Activated CD4-positive, alpha-beta T cell treated with anti-CD3 and anti-CD28 coated beads, Interleukin-2, amount 10 ng/mL, durations not matched to agents 24 days and 14 days (primary cell): ENCODE measurements at regions of chr14 and their contacts with region 1.

Region 1: DNA sequence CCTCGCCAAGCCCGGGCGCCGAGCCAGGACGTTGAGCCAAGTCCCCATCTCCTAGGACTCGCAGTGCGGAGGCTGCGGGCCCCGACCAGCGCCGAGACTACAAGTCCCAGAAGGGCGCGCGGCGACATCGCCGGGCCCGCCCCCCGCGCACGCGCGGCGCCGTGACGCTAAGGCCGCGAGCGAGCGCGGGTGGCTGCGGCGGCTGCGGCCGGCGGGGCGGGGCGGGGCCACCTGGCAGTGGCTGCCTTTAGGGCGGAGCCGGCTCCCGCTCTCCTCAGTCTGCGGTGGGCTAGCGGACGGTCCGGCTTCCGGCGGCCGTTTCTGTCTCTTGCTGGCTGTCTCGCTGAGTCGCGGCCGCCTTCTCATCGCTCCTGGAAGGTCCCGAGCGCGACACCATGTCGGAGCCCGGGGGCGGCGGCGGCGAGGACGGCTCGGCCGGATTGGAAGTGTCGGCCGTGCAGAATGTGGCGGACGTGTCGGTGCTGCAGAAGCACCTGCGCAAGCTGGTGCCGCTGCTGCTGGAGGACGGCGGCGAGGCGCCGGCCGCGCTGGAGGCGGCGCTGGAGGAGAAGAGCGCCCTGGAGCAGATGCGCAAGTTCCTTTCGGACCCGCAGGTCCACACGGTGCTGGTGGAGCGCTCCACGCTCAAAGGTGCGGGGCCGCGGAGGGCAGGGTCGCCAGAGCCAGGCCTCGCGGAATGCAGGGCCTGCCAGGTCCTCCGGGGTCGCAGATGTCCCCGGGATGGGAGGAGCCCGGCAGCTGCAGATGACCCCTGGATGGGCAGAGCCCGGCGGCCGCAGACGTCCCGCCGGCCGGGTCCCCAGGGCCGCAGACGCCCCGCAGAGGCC is at the start of gene DYNC1H1:
- DNase-seq: peak; percentile 98
- H3K4me3 Mint-ChIP-seq: peak within 1 kb of the TSS; percentile 94
- H3K27ac Mint-ChIP-seq: peak within 1 kb of the TSS; percentile 94
- H3K4me1 Mint-ChIP-seq: peaks cover 35% of the 10 kb centered on the region
- H3K27me3 Mint-ChIP-seq: peaks cover 2% of the 10 kb centered on the region
- total RNA-seq, gene DYNC1H1: 265 and 272 TPM in 2 replicates

Region 2: DNA sequence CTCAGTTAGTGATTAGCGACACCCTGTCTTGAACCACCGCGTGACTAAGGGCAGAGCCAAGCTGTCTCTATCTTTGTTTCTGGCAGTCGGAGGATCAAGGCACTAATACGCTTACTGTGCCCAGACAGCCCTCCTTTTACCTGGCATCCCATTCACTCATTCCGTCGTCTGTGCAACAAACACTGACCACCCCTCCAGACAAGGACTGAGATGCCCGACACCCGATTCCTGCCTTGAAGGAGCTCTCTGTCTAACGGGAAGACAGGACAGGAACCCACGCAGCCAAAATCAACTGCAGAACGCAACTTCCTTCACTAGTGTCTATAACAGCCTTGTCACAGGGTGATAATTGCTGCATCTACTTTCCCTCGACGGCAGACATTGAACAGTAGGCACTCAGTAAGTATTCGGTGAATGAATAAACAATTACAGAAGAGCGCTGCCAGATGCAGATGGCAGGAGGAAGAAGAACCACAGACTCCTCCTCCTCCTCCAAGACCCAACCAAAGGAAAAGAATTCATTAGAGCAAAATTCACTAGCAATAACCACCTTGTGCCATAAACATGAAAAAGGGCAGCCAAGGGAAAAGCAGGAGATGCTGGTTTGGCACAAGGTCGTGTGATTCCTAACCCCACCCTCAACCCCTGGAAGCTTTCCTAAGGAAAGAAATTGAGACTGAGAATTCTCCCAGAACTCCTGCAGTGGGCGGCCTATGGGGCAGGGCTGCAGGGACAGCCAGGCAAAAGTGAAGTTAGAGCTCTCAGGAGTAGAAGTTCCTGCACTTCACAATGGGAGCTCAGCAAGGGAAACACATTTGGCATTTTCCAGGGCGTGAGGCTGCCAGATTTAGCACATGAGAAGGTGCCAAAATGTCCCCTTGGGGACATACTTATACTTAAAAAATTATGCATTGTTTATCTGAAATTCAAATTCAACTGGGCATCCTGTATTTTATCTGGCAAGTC is 589.9 kb before region 1 on chr14:
- intact Hi-C with region 1: no loop called
- DNase-seq: peak; percentile 29
- H3K4me3 Mint-ChIP-seq: no peak overlapping the region
- H3K27ac Mint-ChIP-seq: no peak overlapping the region
- H3K4me1 Mint-ChIP-seq: no peaks in the 10 kb centered on the region
- H3K27me3 Mint-ChIP-seq: peaks cover 10% of the 10 kb centered on the region

Region 3: GRCh38 chr14:101707068-101707842 is 257.3 kb before region 1 on chr14:
- intact Hi-C with region 1: loop called (anchors 2 kb)
- DNase-seq: peak; percentile 92
- H3K4me3 Mint-ChIP-seq: peak overlapping the region; percentile 56
- H3K27ac Mint-ChIP-seq: peak overlapping the region; percentile 79
- H3K4me1 Mint-ChIP-seq: peaks cover 24% of the 10 kb centered on the region
- H3K27me3 Mint-ChIP-seq: peaks cover 21% of the 10 kb centered on the region

Region 4: DNA sequence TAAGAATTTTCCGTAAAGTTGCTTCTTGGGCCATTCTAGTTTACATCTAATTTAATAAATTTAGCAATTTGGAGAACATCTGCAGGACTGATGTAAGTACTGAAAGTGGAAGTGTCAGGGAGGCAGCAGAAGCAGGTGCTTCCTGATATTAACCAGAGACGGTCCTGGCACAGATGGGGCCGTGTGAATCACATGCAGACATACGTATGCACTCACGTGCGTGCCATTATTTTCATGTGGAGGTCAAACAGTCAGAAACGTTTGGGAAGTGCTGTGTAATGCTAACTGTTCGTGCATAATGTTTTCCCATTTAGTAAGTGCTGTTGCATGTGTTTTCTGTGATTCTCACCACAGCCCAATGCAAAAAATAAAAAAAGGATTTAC is 88.0 kb before region 1 on chr14:
- intact Hi-C with region 1: loop called (anchors 1 kb)
- DNase-seq: peak; percentile 88
- H3K4me3 Mint-ChIP-seq: peak overlapping the region; percentile 82
- H3K27ac Mint-ChIP-seq: peak overlapping the region; percentile 93
- H3K4me1 Mint-ChIP-seq: peaks cover 67% of the 10 kb centered on the region
- H3K27me3 Mint-ChIP-seq: no peaks in the 10 kb centered on the region

Region 5: GRCh38 chr14:102020058-102020971 is 55.8 kb after region 1 on chr14:
- intact Hi-C with region 1: loop called (anchors 2 kb)
- DNase-seq: peak; percentile 85
- H3K4me3 Mint-ChIP-seq: peak overlapping the region; percentile 54
- H3K27ac Mint-ChIP-seq: peak overlapping the region; percentile 88
- H3K4me1 Mint-ChIP-seq: peaks cover 22% of the 10 kb centered on the region
- H3K27me3 Mint-ChIP-seq: no peaks in the 10 kb centered on the region

Region 6: GRCh38 chr14:102096214-102097114 is 131.9 kb after region 1 on chr14:
- intact Hi-C with region 1: loop called (anchors 1 kb)
- DNase-seq: peak; percentile 90
- H3K4me3 Mint-ChIP-seq: no peak overlapping the region
- H3K27ac Mint-ChIP-seq: peak overlapping the region; percentile 66
- H3K4me1 Mint-ChIP-seq: peaks cover 21% of the 10 kb centered on the region
- H3K27me3 Mint-ChIP-seq: peaks cover 2% of the 10 kb centered on the region

Region 7: DNA sequence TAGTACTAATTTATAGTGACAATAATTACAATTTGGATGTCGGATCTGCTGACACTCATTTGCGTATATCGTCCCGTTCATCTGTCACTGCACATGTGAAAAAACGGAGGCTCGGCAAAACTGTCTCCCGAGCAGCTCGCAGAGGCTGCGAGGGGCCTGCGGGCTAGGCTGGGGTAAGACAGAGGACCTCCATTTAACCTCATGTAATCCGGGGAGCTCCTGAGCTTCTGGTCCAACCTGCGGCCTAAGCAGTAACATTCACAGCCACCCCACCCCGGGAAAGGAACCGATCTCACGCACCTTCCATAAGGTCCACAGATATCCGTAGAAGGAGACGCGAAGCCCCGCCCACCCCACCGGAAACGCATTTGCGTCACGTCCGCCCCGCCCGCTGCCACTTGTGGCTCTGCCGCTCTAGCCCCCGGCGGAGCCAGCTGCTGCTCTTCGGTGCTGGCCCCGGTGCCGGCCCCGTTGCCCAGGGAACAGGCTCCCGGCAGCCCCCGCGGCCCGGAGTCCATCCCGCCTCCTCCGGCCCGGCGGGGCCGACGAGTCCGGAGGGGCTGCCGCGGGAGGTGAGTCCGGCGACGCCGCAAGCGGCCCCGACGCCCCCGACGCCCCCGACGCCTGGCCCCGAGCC is 398.1 kb after region 1 on chr14 and contains the starts of genes CINP and TECPR2:
- intact Hi-C with region 1: loop called (anchors 5 kb)
- DNase-seq: peak; percentile 98
- H3K4me3 Mint-ChIP-seq: no peak within 1 kb of the TSS
- H3K27ac Mint-ChIP-seq: peak within 1 kb of the TSS; percentile 92
- H3K4me1 Mint-ChIP-seq: peaks cover 27% of the 10 kb centered on the region
- H3K27me3 Mint-ChIP-seq: peaks cover 2% of the 10 kb centered on the region
- total RNA-seq, gene CINP: 43.7 and 46.2 TPM in 2 replicates
- total RNA-seq, gene TECPR2: 6.4 and 7.4 TPM in 2 replicates

Region 8: GRCh38 chr14:102500158-102500662 is 535.7 kb after region 1 on chr14:
- intact Hi-C with region 1: no loop called
- DNase-seq: peak; percentile 67
- H3K4me3 Mint-ChIP-seq: no peak overlapping the region
- H3K27ac Mint-ChIP-seq: peak overlapping the region; percentile 48
- H3K4me1 Mint-ChIP-seq: peaks cover 11% of the 10 kb centered on the region
- H3K27me3 Mint-ChIP-seq: no peaks in the 10 kb centered on the region

Region 9: DNA sequence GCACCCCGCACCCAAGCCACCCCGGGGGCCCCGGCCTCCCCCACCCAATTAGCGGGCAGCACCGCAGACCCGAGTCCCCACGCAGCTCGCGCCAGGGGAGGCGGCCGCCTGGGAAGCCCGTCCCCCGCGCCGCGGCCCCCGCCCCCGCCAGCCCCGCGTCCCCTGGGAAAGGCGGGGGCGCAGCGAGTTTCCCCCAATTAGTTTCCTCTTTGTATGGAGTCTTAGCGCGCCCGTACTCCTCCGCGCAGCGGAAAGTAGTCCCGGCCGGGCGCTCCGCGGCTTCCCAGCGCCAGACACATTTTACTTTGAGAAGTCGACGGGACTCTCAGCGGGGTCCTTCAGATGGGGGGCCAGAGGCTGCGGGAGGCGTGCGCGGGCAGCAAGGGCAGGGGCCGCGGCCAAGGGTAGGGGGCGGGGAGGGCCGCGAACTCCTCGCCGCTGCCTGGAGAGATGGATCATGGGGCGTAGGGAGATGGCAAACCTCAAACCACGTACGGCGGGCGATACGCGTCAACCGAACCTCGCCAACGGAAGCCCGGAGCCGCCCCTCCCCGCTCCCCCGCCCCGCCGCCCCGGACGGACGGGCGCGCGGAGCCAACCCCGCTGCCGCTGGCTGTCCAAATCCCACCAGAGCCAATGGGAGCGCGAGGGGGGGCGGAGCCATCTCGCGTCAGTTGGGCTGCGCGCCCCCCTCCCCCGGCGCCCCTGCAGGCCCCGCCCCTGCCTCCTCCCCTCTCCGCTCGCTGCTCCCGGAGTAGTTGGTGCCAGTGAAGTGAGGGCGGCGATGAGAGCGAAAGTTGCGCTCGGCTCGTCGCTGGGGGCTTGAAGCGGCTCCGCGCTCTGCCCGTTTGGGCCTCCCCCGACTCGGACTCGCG is 627.6 kb after region 1 on chr14 and contains the start of gene RCOR1:
- intact Hi-C with region 1: loop called (anchors 5 kb)
- DNase-seq: peak; percentile 99
- H3K4me3 Mint-ChIP-seq: peak within 1 kb of the TSS; percentile 94
- H3K27ac Mint-ChIP-seq: peak within 1 kb of the TSS; percentile 95
- H3K4me1 Mint-ChIP-seq: peaks cover 23% of the 10 kb centered on the region
- H3K27me3 Mint-ChIP-seq: peaks cover 4% of the 10 kb centered on the region
- total RNA-seq, gene RCOR1: 21.8 and 24.0 TPM in 2 replicates